Psoas muscle (tissue), 8 donors: ENCODE measurements at regions of chr21 and their contacts with region 1.

Region 1: GRCh38 chr21:32770871-32771523 is 558 bp downstream of the PAXBP1 start:
- DNase-seq: peak; percentile 59 to 74
- ATAC-seq: peak; percentile 56 to 70 (median 64)
- H3K4me3 ChIP-seq: peak overlapping the region; percentile 80
- H3K27ac ChIP-seq: peak overlapping the region; percentile 90
- H3K4me1 ChIP-seq: peaks cover 28% of the 10 kb centered on the region
- H3K27me3 ChIP-seq: no peaks in the 10 kb centered on the region
- CTCF ChIP-seq: no peak

Region 2: GRCh38 chr21:32727687-32728455 is 43.1 kb before region 1 on chr21 and contains the start of gene SYNJ1:
- intact Hi-C with region 1: loop called (anchors 2 to 5 kb)
- DNase-seq: peak; percentile 95 to 98
- ATAC-seq: peak; percentile 98 to 99 (median 98)
- H3K4me3 ChIP-seq: peak within 1 kb of the TSS; percentile 96
- H3K27ac ChIP-seq: peak within 1 kb of the TSS; percentile 94
- H3K4me1 ChIP-seq: peaks cover 12% of the 10 kb centered on the region
- H3K27me3 ChIP-seq: no peaks in the 10 kb centered on the region
- CTCF ChIP-seq: no peak
- total RNA-seq, gene SYNJ1: 10.4 to 12.2 (median 11.5) TPM